ENCODE measurements at regions of chr10 and their contacts with region 1.

Region 1: DNA sequence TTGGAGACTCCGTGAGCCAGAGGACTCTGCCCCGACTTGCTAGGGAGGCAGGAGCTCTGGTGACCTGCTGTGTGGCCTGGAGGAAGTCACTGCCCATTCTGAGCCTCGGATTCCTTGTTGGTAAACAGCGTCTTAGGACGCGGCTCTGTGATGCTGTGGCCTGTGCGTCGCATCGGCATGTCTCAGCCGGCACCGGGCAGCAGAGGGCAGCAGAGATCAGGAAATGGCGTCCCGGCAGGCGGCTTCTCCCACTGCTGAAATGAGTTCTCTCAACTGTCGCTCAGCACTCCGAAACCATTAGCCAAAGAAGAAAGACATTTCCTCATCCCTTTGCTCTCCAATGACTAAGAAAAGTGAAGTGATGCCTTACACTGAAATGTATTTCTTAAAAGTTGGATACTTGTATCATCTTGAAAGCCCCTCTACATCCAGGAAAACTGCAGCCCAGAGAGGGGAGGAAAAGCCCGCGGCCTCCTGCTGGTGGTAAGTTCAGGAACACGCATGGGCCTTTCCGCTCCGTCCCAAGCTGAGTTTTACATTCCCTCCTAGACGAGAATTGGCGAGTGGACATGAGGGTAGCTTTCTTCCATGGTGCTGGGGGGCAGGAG is 91.7 kb downstream of the WDR11 start:
- ATAC-seq: peak; percentile 87 to 99 (median 95)
- H3K4me3 ChIP-seq: no peak overlapping the region
- H3K27ac ChIP-seq: no peak overlapping the region
- H3K4me1 ChIP-seq: peaks cover 0 to 13% of the 10 kb centered on the region in 2 donors

Region 2: DNA sequence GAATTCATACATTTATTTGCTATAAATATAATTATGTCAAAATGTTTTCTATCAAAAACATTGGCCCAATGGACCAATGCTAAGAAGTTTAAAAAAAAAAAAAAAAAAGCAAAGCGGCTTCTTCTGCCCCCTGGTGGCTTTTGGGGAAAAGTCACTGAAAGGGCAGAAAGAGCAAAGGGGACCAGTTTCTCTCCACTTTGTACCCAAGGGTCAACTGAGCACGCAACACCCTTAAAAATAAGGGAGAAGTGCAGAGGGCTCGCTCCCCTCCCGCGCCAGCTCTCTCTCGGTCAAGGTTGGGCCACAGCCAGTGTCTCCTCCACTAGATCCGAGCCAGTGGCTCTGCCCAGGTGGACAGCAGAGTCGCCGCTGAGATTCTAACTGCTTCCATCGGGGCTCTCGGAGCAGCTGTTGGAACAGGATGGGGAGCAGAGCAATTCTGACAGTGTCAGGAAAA is 791.7 kb after region 1 on chr10:
- in situ Hi-C with region 1: loop called in 3 of 9 experiments (anchors 25 kb)
- ATAC-seq: peak in 2 of 8 experiments; percentile 24 to 27
- H3K4me3 ChIP-seq: no peak overlapping the region
- H3K27ac ChIP-seq: no peak overlapping the region
- H3K4me1 ChIP-seq: peaks cover 19 to 20% of the 10 kb centered on the region in 2 donors

Region 3: DNA sequence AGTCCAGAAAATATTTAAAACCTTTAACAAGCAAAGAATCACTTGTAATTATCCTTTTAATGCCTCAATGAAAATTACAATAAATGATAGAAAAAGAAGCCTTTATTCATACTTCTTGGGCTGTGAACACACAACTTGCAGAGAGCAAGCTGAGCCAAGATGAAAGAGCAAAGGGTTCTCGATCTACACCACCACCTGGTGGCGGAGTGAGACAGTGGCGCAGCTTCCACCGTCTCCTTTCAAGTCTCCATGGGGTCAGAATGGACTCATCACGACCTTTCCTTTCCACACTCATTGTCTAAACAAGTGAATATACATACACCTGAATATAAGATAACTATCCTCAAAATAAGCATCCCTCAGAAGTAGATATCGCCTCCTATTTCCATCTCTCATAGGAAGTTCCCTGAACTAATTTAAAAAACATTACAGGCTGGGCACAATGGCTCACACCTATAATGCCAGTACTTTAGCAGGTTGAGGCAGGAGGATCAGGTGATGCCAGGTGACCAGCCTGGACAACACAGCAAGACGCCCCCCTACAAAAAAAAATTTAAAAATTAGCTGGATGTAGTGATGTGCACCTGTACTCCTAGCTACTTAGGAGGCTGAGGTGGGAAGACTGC is 944.2 kb after region 1 on chr10:
- in situ Hi-C with region 1: loop called in 8 of 9 experiments (anchors 10 to 25 kb)
- ATAC-seq: peak; percentile 54 to 93 (median 82)
- H3K4me3 ChIP-seq: no peak overlapping the region
- H3K27ac ChIP-seq: no peak overlapping the region
- H3K4me1 ChIP-seq: no peaks in the 10 kb centered on the region

Region 4: GRCh38 chr10:121899727-121900126 is 956.8 kb after region 1 on chr10:
- in situ Hi-C with region 1: loop called in 8 of 9 experiments (anchors 10 to 25 kb)
- ATAC-seq: no peak
- H3K4me3 ChIP-seq: no peak overlapping the region
- H3K27ac ChIP-seq: no peak overlapping the region
- H3K4me1 ChIP-seq: no peaks in the 10 kb centered on the region

Measured in motor neuron (in vitro differentiated cells).